PC-3 (cell line): ENCODE measurements at regions of chrX and their contacts with region 1.

Region 1: GRCh38 chrX:16664074-16664473 is 14.1 kb downstream of the S100G start:
- DNase-seq: peak; percentile 60
- ATAC-seq: peak; percentile 66
- H3K4me3 ChIP-seq: no peak overlapping the region
- H3K27ac ChIP-seq: peak overlapping the region; percentile 38
- H3K4me1 ChIP-seq: peaks cover 48% of the 10 kb centered on the region
- H3K27me3 ChIP-seq: no peaks in the 10 kb centered on the region
- CTCF ChIP-seq: peak; percentile 46

Region 2: DNA sequence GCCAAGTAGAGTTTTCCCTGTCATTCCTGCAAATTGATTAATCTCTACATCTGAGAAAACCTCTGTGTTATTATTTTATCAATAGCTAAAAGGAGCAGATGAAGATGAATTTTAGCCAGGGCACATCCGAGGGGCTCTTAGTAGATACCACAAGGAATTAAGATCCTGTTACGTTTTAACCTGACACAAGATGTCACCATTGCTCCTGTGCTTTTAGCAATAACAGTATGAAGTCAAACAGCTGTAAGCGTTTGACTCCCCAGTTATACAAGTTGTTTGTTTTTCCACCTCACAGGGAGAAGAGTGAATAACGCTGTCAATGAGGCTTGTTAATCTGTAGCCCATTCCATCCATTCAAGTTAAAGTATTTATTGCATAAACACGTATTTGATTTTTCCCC is 733.5 kb before region 1 on chrX:
- CTCF ChIA-PET with region 1: no interaction called
- POLR2A ChIA-PET with region 1: no interaction called
- intact Hi-C with region 1: loop called (anchors 1 kb)
- DNase-seq: peak; percentile 66
- ATAC-seq: peak; percentile 88
- H3K4me3 ChIP-seq: no peak overlapping the region
- H3K27ac ChIP-seq: no peak overlapping the region
- H3K4me1 ChIP-seq: no peaks in the 10 kb centered on the region; the same call in 1 of the 2 replicates
- H3K27me3 ChIP-seq: no peaks in the 10 kb centered on the region
- CTCF ChIP-seq: peak; percentile 66

Region 3: GRCh38 chrX:16429406-16429805 is 234.7 kb before region 1 on chrX:
- CTCF ChIA-PET with region 1: interaction called, 14 read pairs
- POLR2A ChIA-PET with region 1: no interaction called
- intact Hi-C with region 1: no loop called
- DNase-seq: no peak
- ATAC-seq: no peak
- H3K4me3 ChIP-seq: no peak overlapping the region
- H3K27ac ChIP-seq: no peak overlapping the region
- H3K4me1 ChIP-seq: no peaks in the 10 kb centered on the region
- H3K27me3 ChIP-seq: no peaks in the 10 kb centered on the region
- CTCF ChIP-seq: no peak

Region 4: DNA sequence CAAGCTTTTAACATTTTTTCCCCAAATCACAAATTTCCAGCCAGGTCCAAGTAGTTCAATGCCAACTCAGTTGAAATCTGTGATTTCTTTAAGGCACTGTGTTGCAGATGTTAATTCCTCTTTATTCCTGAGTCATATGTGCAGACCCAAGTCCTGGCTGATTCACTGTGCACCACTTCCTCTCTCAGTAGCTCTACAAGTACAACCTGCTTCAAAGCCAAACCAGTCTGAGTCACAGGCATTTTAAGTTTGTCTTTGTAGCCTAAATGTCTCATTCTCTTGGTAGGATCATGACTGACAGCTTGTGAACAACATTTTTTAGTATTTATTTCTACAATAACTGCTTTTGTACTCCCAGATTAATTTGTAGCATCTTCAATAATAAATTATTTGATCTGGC is 179.7 kb before region 1 on chrX:
- CTCF ChIA-PET with region 1: interaction called, 5 read pairs
- POLR2A ChIA-PET with region 1: no interaction called
- intact Hi-C with region 1: loop called (anchors 1 kb)
- DNase-seq: peak; percentile 95
- ATAC-seq: peak; percentile 96
- H3K4me3 ChIP-seq: no peak overlapping the region
- H3K27ac ChIP-seq: peak overlapping the region; percentile 98
- H3K4me1 ChIP-seq: peaks cover 54% of the 10 kb centered on the region
- H3K27me3 ChIP-seq: no peaks in the 10 kb centered on the region
- CTCF ChIP-seq: no peak

Region 5: DNA sequence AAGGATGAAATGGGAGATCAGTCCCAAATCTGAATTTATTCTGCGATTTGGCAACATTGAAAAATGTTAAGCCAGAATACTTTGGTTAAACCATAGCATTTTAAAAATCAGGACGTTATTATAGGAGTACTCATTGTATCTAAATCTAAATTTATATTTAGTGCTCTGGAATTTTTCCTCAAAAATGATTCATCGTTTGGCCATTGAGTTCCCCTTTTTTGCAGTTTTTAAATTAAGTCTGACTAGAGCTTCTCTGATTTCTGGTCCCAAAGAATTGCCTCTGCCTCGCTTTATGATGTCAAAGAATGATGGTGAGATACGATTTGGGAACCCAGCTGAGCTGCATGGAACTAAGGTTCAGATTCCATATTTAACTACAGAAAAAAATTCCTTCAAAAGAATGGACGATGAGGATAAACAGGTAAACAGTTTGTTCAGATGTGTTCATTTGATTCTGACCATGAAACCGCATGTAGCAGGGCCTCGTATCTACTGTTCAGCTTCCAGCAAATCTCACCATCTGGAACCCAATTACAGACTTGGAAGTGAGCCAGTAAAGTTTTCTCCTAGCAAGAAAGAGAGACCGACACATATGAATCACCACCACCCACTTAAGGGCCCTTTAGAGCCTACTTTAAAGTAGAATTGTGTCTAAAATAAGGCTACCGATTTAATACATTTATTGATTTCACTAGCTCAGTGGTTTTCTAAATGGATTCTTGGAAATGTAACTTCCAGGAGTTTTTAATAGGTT is 358.0 kb after region 1 on chrX:
- CTCF ChIA-PET with region 1: no interaction called
- POLR2A ChIA-PET with region 1: no interaction called
- intact Hi-C with region 1: no loop called
- DNase-seq: no peak
- ATAC-seq: no peak
- H3K4me3 ChIP-seq: no peak overlapping the region
- H3K27ac ChIP-seq: no peak overlapping the region
- H3K4me1 ChIP-seq: no peaks in the 10 kb centered on the region
- H3K27me3 ChIP-seq: no peaks in the 10 kb centered on the region
- CTCF ChIP-seq: no peak